Activated T-helper 1 cell treated with anti-CD3 and anti-CD28 coated beads, Interleukin-12 subunit alpha, Interleukin-12 subunit beta, Interleukin-2, Interleukin-4 antibody, amounts not matched to agents 30 ng/mL and 10 ng/mL and 1 ng/mL, durations not matched to agents 14 hours and 24 hours and 36 hours (primary cell): ENCODE measurements at regions of chr5 and their contacts with region 1.

Region 1: GRCh38 chr5:96868603-96869371 is 7.5 kb upstream of the ERAP2 start:
- DNase-seq: no peak
- H3K4me3 Mint-ChIP-seq: no peak overlapping the region
- H3K27ac Mint-ChIP-seq: peak overlapping the region; percentile 47
- H3K4me1 Mint-ChIP-seq: peaks cover 57% of the 10 kb centered on the region
- H3K27me3 Mint-ChIP-seq: no peaks in the 10 kb centered on the region

Region 2: DNA sequence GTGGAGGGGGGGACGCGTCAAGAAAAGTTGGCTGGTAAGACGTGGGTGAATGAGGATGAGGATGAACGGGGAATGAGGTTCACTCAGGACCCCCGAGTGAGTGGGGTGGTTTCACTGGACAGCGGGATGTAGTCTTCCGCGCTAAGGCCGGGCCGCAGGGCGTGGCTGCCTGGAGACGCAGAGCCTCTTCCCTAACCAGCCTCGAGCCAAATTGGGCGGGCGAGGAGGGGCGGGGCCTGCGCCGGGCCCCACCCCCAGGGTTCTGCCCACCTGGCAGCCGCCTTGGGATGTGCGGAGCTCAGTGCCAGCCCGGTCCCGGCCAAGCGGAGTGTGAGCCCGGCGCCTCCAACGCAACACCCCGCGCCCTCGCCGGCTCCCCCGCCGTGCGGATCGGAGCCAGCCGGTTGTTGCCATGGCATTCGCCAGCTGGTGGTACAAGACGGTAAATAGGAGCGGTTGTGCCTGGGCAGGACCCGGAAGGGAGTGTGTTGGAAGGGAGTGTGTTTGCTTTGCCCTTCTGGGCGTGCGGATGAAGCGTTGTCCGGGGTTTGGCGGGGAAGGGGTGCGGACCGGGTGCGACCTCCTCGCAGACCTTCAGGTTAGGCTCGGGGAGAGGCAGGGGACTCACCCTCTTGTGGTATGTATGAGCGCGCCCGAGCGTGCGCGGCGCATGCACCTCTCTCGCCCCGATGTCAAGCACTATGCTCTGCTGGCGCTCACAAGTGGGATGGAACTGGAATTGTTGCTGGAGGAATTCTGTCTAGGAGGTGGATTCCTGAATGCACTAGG is 205.9 kb before region 1 on chr5:
- intact Hi-C with region 1: no loop called
- DNase-seq: peak; percentile 82
- H3K4me3 Mint-ChIP-seq: peak overlapping the region; percentile 98
- H3K27ac Mint-ChIP-seq: peak overlapping the region; percentile 98
- H3K4me1 Mint-ChIP-seq: peaks cover 67% of the 10 kb centered on the region
- H3K27me3 Mint-ChIP-seq: peaks cover 11% of the 10 kb centered on the region

Region 3: DNA sequence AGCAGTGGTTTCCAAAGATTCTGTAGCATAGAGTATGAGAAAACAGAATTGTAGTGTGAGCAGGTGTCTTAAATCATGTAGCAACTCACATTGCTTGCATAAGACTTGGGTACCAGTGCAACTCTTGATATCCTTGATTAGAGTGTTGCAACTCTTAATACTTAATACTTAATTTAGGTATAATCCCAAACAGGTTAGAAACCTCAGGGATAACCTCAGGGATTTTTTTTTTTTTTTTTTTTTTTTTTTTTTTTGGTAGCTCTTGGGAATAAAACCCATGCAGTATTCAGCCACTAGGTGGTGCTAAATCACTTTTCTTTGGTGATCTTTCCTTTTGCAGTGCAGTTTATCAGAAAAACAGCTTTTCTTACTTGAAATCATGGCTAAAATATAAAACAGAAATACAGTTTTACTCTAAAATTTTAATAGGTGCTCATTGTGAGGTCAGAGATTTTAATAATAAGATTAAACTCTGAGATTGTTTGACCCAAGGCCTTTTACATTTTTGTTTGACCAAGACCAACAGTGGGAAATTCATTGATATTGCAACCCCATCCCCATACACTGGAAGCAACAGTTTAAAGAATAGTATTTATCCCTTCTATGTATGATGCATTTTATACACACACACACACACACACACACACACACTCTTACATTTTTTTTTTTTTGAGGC is 116.3 kb before region 1 on chr5:
- intact Hi-C with region 1: loop called (anchors 2 kb)
- DNase-seq: no peak
- H3K4me3 Mint-ChIP-seq: no peak overlapping the region
- H3K27ac Mint-ChIP-seq: no peak overlapping the region
- H3K4me1 Mint-ChIP-seq: peaks cover 5% of the 10 kb centered on the region
- H3K27me3 Mint-ChIP-seq: no peaks in the 10 kb centered on the region

Region 4: GRCh38 chr5:96885518-96886338 is 16.9 kb after region 1 on chr5:
- intact Hi-C with region 1: loop called (anchors 1 kb)
- DNase-seq: peak; percentile 52
- H3K4me3 Mint-ChIP-seq: peak overlapping the region; percentile 73
- H3K27ac Mint-ChIP-seq: peak overlapping the region; percentile 86
- H3K4me1 Mint-ChIP-seq: peaks cover 77% of the 10 kb centered on the region
- H3K27me3 Mint-ChIP-seq: no peaks in the 10 kb centered on the region

Region 5: DNA sequence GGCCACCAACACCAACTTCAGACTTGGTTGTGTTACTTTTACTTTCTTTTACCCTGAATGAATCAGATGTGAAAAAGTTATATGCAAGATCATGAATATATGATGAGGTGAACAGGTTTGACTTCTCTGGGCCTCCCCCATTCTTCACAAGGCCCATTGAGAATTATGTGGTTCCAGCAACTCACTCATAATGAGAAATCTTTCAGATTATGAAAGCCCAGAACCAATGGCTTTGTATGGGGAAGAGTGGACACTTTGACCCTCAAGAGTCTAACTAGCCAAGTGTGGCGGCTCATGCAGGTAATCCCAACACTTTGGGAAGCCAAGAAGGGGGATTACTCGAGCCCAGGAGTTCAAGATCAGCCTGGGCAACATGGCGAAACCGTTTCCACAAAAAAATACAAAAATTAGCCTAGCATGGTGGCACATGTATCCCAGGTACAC is 51.0 kb after region 1 on chr5:
- intact Hi-C with region 1: loop called (anchors 1 kb)
- DNase-seq: no peak
- H3K4me3 Mint-ChIP-seq: no peak overlapping the region
- H3K27ac Mint-ChIP-seq: no peak overlapping the region
- H3K4me1 Mint-ChIP-seq: peaks cover 41% of the 10 kb centered on the region
- H3K27me3 Mint-ChIP-seq: no peaks in the 10 kb centered on the region

Region 6: GRCh38 chr5:96968074-96968473 is 99.3 kb after region 1 on chr5:
- intact Hi-C with region 1: no loop called
- DNase-seq: no peak
- H3K4me3 Mint-ChIP-seq: no peak overlapping the region
- H3K27ac Mint-ChIP-seq: no peak overlapping the region
- H3K4me1 Mint-ChIP-seq: peaks cover 65% of the 10 kb centered on the region
- H3K27me3 Mint-ChIP-seq: no peaks in the 10 kb centered on the region

Region 7: GRCh38 chr5:96997265-96997859 is 128.6 kb after region 1 on chr5:
- intact Hi-C with region 1: loop called (anchors 1 kb)
- DNase-seq: no peak
- H3K4me3 Mint-ChIP-seq: no peak overlapping the region
- H3K27ac Mint-ChIP-seq: no peak overlapping the region
- H3K4me1 Mint-ChIP-seq: peaks cover 35% of the 10 kb centered on the region
- H3K27me3 Mint-ChIP-seq: no peaks in the 10 kb centered on the region

Region 8: GRCh38 chr5:97044052-97044451 is 175.3 kb after region 1 on chr5:
- intact Hi-C with region 1: loop called (anchors 5 kb)
- DNase-seq: no peak
- H3K4me3 Mint-ChIP-seq: no peak overlapping the region
- H3K27ac Mint-ChIP-seq: no peak overlapping the region
- H3K4me1 Mint-ChIP-seq: no peaks in the 10 kb centered on the region
- H3K27me3 Mint-ChIP-seq: peaks cover 4% of the 10 kb centered on the region

Region 9: DNA sequence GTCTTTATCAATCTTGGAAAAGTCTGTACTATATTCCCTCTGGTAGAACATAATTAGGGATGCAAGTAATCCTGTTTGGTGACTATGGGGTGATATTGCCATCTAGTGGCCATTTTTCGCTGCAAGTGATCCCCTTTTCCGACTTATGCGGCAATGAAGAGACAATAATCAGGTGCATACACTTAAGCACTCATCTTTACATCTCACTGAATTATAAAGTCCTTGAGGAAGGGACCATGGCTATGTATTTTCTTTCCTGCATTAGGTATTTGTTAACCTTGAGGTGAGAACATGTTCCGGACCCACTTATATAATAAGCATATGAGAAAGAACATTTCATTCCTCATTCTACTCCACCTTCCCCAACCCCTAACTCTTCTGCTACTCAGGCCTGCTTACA is 293.3 kb after region 1 on chr5:
- intact Hi-C with region 1: loop called (anchors 1 kb)
- DNase-seq: peak; percentile 20
- H3K4me3 Mint-ChIP-seq: no peak overlapping the region
- H3K27ac Mint-ChIP-seq: no peak overlapping the region
- H3K4me1 Mint-ChIP-seq: no peaks in the 10 kb centered on the region
- H3K27me3 Mint-ChIP-seq: peaks cover 2% of the 10 kb centered on the region